B cell (primary cell): ENCODE measurements at regions of chr15 and their contacts with region 1.

Region 1: GRCh38 chr15:77543159-77543882 is 89.4 kb downstream of the LINGO1 start:
- DNase-seq: peak; percentile 88
- ATAC-seq: peak; percentile 94
- H3K4me3 ChIP-seq: peak overlapping the region in 4 of 5 experiments; percentile 56 to 73 (median 62)
- H3K4me3 Mint-ChIP-seq: peak overlapping the region; percentile 80
- H3K27ac ChIP-seq: peak overlapping the region in 1 of 2 donors; percentile 67
- H3K27ac Mint-ChIP-seq: peak overlapping the region; percentile 61
- H3K4me1 ChIP-seq: peaks cover 22 to 39% of the 10 kb centered on the region in 2 donors
- H3K4me1 Mint-ChIP-seq: peaks cover 41% of the 10 kb centered on the region
- H3K27me3 ChIP-seq: peaks cover 0 to 2% (median 0%) of the 10 kb centered on the region in 4 experiments
- H3K27me3 Mint-ChIP-seq: no peaks in the 10 kb centered on the region
- CTCF ChIP-seq: peak; percentile 99

Region 2: GRCh38 chr15:77024271-77025082 is 518.8 kb before region 1 on chr15:
- CTCF ChIA-PET with region 1: interaction called, 33 read pairs
- POLR2A ChIA-PET with region 1: no interaction called
- intact Hi-C with region 1: loop called (anchors 1 kb)
- DNase-seq: peak; percentile 74
- ATAC-seq: peak; percentile 78
- H3K4me3 ChIP-seq: no peak overlapping the region
- H3K4me3 Mint-ChIP-seq: no peak overlapping the region
- H3K27ac ChIP-seq: no peak overlapping the region
- H3K27ac Mint-ChIP-seq: no peak overlapping the region
- H3K4me1 ChIP-seq: peaks cover 4 to 21% of the 10 kb centered on the region in 2 donors
- H3K4me1 Mint-ChIP-seq: peaks cover 17% of the 10 kb centered on the region
- H3K27me3 ChIP-seq: no peaks in the 10 kb centered on the region
- H3K27me3 Mint-ChIP-seq: no peaks in the 10 kb centered on the region
- CTCF ChIP-seq: peak; percentile 98

Region 3: GRCh38 chr15:77107531-77108355 is 435.6 kb before region 1 on chr15:
- CTCF ChIA-PET with region 1: interaction called, 92 read pairs
- POLR2A ChIA-PET with region 1: interaction called, 3 read pairs
- intact Hi-C with region 1: loop called (anchors 1 kb)
- DNase-seq: peak; percentile 60
- ATAC-seq: peak; percentile 51
- H3K4me3 ChIP-seq: no peak overlapping the region
- H3K4me3 Mint-ChIP-seq: no peak overlapping the region
- H3K27ac ChIP-seq: no peak overlapping the region
- H3K27ac Mint-ChIP-seq: no peak overlapping the region
- H3K4me1 ChIP-seq: peaks cover 3 to 14% of the 10 kb centered on the region in 2 donors
- H3K4me1 Mint-ChIP-seq: peaks cover 11% of the 10 kb centered on the region
- H3K27me3 ChIP-seq: no peaks in the 10 kb centered on the region
- H3K27me3 Mint-ChIP-seq: no peaks in the 10 kb centered on the region
- CTCF ChIP-seq: peak; percentile 64

Region 4: DNA sequence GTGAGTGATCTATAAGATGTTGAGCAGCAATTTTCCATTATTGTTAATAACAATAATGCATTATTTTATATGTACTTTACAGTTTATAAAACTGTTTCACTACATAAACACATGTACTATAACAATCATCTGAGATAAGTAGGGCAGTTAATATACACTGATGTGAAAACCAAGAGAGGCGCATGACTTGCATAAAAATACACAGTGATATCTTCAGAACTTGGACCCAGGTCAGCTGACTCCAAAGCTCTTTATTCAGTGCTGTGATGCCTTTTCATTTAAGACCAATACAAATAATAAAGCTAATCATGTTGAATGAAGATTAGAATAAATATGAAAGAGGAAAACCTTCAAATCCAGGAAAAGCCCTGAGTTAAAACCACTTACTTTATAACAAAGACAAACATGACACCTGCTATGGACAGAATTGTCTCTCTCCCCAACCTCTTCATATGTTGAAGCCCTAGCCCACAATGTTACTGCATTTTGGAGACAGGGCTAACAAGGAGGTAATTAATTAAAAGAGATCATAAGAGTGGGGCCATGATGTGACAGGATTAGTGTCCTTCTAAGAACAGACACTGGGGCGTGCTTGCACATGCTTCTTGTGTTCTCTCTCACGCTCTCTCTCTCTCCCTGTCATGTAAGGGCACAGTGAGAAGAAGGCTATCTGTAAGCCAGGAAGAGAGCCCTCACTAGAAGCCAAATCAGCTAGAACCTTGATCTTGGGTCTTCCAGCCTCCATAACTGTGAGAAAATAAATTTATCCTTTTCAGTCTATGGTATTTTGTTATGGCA is 416.6 kb before region 1 on chr15:
- CTCF ChIA-PET with region 1: interaction called, 187 read pairs
- POLR2A ChIA-PET with region 1: no interaction called
- intact Hi-C with region 1: no loop called
- DNase-seq: no peak
- ATAC-seq: no peak
- H3K4me3 ChIP-seq: no peak overlapping the region
- H3K4me3 Mint-ChIP-seq: no peak overlapping the region
- H3K27ac ChIP-seq: no peak overlapping the region
- H3K27ac Mint-ChIP-seq: no peak overlapping the region
- H3K4me1 ChIP-seq: peaks cover 24 to 25% of the 10 kb centered on the region in 2 donors
- H3K4me1 Mint-ChIP-seq: peaks cover 31% of the 10 kb centered on the region
- H3K27me3 ChIP-seq: no peaks in the 10 kb centered on the region
- H3K27me3 Mint-ChIP-seq: no peaks in the 10 kb centered on the region
- CTCF ChIP-seq: no peak

Region 5: DNA sequence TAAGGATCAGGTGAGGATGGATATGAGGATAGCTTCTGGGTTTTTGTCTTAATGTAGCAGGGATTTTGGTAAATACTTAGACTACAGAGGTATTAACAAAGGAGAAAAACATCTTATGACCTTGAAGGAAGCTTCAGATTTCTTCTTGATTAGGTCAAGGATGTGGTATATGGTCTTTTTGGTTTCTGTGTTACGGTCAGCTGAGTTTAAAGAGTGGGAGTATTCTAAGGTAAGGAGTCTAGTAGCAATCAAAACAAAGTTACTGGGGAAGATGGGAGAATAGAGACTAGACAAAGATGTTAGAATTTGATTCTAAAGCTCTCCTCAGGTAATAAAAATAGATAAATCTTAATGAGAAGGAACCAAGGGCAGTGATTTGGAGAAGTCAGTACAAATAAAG is 116.5 kb before region 1 on chr15:
- CTCF ChIA-PET with region 1: interaction called, 11 read pairs
- POLR2A ChIA-PET with region 1: no interaction called
- intact Hi-C with region 1: loop called (anchors 5 kb)
- DNase-seq: no peak
- ATAC-seq: no peak
- H3K4me3 ChIP-seq: peak overlapping the region in 1 of 5 experiments; percentile 25
- H3K4me3 Mint-ChIP-seq: peak overlapping the region; percentile 29
- H3K27ac ChIP-seq: peak overlapping the region; percentile 44 to 85
- H3K27ac Mint-ChIP-seq: peak overlapping the region; percentile 66
- H3K4me1 ChIP-seq: peaks cover 17 to 28% of the 10 kb centered on the region in 2 donors
- H3K4me1 Mint-ChIP-seq: peaks cover 59% of the 10 kb centered on the region
- H3K27me3 ChIP-seq: no peaks in the 10 kb centered on the region
- H3K27me3 Mint-ChIP-seq: no peaks in the 10 kb centered on the region
- CTCF ChIP-seq: no peak

Region 6: DNA sequence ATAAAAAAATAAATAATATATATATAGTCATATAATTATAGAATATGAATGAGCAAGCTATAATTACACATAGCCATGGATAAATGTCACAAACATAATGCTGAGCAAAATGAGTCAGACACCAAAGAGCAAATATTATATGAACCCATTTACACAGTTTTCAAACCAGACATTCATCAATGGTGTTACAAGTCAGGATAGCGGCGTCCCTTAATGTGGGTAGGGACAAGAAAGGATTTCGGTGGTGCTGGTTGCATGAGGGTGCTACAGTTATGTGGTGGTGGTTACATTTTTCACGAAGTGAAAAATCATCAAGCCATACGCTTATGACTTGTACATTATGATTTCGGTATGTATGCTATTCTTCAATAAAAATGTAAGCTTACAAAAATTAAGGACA is 22.1 kb before region 1 on chr15:
- CTCF ChIA-PET with region 1: interaction called, 11 read pairs
- POLR2A ChIA-PET with region 1: no interaction called
- intact Hi-C with region 1: no loop called
- DNase-seq: no peak
- ATAC-seq: no peak
- H3K4me3 ChIP-seq: no peak overlapping the region
- H3K4me3 Mint-ChIP-seq: no peak overlapping the region
- H3K27ac ChIP-seq: no peak overlapping the region
- H3K27ac Mint-ChIP-seq: no peak overlapping the region
- H3K4me1 ChIP-seq: no peaks in the 10 kb centered on the region
- H3K4me1 Mint-ChIP-seq: no peaks in the 10 kb centered on the region
- H3K27me3 ChIP-seq: no peaks in the 10 kb centered on the region
- H3K27me3 Mint-ChIP-seq: no peaks in the 10 kb centered on the region
- CTCF ChIP-seq: no peak